Activated naive CD8-positive, alpha-beta T cell treated with anti-CD3 and anti-CD28 coated beads, Interleukin-2, amount 10 ng/mL, durations not matched to agents 7 days and 5 days (primary cell): ENCODE measurements at regions of chr7 and their contacts with region 1.

Region 1: DNA sequence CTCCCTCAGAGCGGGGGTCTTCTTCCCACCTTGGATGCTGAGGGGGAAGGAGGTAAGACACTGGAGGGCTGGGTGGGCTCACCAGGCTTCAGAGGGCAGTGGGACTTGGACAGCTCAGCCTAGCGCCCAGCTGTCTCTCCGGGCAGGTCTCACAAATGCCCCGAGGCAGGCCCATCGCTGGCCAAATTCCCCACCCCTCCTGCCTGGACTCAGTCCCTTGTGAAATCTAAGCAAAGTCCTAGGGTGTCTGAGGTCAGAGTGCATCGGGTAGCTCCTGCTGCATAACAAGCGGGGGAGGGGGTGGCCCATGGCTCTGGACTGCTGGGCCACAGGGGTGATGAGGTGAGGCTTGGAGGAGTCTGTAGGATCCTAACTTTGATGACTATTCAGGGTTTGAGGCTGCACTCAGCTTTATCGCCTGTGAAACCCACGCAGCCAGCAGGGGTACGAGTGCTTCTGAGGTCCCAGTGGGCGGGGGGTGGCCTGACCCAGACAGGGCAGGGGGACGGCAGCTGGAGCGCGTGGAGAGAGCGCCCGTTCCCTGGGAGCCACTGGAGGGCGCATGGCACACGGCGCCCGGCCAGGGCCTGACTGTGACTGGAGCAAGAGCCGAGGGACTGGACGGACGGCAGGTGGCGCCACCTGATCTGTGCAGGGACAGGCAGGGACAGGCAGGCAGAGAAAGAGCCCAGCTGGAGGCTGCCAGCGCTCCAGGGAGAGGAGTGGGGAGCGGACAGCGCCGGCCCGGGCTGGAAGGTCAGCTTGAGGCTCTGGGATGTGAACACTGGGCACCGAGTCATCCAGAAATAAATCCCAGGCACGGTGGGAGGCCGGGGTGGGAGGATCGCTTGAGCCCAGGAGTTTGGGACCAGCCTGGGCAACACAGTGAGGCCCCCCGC is 10.0 kb downstream of the CYP2W1 start:
- DNase-seq: peak; percentile 94
- ATAC-seq: peak; percentile 99
- H3K4me3 Mint-ChIP-seq: no peak overlapping the region
- H3K27ac Mint-ChIP-seq: no peak overlapping the region
- H3K4me1 Mint-ChIP-seq: peaks cover 3% of the 10 kb centered on the region
- H3K27me3 Mint-ChIP-seq: no peaks in the 10 kb centered on the region

Region 2: DNA sequence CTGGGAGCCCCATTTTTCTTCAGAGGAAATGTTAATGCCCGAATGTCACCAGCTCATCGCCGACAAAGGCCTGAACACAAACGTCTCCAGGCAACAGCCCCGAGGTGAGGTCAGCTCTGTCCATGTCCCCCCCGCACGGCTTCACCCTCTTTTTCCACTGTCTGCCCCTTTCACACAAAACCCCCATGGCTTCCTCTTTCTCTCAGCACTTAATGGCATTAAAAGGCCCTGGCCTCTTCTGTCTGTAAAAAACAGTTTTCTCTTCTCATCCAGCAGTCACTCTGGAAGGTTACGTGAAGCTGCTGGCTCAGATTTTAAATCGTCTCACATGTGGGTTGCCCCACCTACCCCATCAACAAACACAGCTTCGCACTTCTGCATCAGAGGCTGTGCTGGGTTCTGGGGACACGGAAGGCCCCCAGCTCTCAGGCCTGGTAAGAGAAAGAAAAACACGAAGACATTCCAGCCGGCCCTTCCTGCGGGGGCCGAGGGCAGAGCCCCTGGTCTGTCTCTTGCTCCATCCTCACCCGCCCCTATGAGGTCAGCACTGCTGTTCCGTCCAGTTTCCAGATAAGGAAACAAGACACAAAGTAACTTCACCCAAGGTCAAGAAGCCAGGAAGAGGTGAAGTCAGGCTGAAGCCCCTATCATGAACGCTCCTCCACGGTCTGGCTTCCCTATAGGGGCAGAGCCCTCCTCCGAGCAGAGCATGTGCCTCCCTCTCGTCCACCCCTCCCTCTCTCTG is 382.3 kb before region 1 on chr7:
- POLR2A ChIA-PET with region 1: no interaction called
- DNase-seq: peak; percentile 42
- ATAC-seq: peak; percentile 46
- H3K4me3 Mint-ChIP-seq: peak overlapping the region; percentile 64
- H3K27ac Mint-ChIP-seq: peak overlapping the region; percentile 92
- H3K4me1 Mint-ChIP-seq: peaks cover 59% of the 10 kb centered on the region
- H3K27me3 Mint-ChIP-seq: no peaks in the 10 kb centered on the region

Region 3: DNA sequence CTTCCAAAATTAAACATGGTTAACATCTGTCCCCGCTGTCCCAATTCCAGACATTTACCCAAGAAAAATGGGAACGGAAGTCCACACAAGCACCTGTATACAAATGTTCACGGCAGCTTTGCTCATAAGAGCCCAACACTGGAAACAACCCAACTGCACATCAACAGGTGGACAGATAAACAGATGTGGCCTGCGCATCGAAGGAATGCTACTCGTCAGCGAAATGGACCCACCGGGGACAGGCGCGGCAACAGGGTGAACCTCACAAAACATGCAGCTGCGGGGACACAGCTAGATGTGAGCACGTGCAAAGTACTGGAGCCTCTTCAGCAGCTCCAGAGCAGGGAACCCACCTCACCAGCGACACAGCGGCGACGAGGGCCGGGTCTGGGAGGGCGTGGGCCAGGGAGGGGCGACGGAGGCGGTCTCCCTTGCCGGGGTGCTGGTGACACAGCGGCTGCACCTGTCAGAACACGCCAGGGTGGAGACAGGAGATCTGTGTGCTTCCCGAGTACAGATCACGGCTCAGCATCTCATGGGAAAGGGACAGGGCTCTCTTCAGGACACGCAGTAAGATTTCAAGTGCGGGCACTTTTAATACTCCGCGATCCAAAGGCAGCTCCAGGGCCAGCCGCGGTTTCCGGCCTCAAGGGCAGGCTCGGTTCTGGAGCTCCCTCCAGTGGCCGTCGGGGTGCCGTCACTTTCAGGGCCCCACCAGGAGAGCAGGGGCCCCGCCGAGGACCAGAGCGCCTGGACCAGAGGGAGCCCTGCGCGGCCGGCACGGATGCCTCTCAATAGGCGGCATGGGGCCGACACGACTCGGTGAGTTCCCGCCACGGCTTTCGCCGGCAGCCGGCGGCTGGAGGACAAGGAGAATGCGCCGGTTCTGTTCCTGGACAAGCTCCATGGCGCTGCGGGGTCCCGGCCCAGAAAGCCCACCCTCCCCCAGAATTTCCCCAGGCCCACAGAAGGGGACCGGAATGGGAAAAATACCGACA is 72.6 kb after region 1 on chr7:
- POLR2A ChIA-PET with region 1: interaction called, 26 read pairs
- DNase-seq: peak; percentile 90
- ATAC-seq: peak; percentile 94
- H3K4me3 Mint-ChIP-seq: peak overlapping the region; percentile 63
- H3K27ac Mint-ChIP-seq: no peak overlapping the region
- H3K4me1 Mint-ChIP-seq: no peaks in the 10 kb centered on the region
- H3K27me3 Mint-ChIP-seq: no peaks in the 10 kb centered on the region